ENCODE measurements at regions of chr12 and their contacts with region 1.

Region 1: DNA sequence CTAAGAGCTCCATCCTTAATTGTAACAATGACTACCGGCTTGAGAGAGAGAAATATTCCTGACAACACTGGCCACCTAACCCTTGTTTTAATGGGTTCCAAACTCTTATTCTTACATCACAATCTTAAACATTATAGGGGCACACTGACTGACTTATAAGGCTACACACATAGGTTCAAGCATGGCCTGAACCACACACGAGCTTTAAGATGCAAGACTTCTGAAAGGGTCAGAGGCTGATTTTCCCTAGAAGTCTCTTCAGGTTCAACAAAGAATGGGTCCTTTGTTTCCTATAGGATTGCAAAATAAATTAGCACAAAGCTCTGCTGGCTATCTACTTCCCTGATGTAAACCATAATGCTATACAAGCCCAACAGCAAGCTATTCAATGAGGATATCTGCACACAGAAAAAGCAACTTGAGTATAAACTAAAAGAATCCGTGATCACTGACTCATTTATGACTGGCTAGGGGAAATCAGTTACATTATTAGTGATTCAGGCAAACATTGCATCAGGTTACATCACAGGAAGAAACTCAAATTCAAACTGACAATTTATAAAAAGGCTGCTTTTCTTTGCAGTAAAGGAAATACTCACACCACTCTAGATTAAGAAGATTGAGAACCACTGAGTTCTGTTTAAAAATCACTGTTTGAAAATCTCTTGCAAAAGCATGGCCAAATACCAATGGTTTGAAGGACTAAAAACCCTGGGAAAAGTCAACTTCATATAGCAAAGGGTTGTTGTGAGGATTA is 8.5 kb downstream of the BTG1 start:
- DNase-seq: no peak
- H3K4me3 ChIP-seq: peak overlapping the region in 1 of 4 donors; percentile 94
- H3K27ac ChIP-seq: peak overlapping the region in 4 of 5 donors; percentile 27 to 99 (median 50)
- H3K4me1 ChIP-seq: peaks cover 39 to 75% of the 10 kb centered on the region in 2 donors
- H3K27me3 ChIP-seq: no peaks in the 10 kb centered on the region
- CTCF ChIP-seq: no peak
- POLR2A ChIP-seq: no peak

Region 2: DNA sequence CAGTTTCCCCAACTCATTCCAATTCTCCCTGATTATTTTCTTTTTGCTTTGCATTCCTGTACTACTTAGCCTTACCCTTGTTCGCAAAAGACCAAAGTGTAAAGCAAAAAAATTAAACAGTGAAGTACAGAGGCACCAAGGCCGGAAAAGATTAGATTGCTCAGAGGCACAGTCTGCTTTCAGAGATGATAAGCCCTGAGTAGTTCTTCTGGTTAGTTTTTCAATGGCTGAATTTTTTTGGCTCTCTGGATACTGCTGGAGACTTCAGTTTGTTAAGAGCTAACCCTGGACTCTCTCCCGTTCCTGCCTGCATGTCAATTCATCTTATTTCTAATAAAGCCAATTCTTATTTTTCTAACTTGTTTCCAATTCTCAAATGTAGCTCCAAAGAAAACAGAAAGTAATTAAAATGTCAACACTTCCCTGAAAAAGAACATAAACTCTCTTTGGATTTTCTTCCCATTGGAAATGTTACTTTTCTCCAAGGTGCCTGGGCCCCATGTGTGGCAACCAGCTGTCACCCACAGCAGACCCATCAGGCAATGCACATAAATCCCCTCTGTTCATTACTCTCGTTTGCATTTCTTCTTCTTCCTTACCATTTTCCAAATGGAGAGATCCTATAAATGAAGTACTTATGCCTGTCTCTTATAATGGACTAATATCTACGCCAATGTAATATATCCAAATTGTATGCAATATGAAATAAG is 134.3 kb before region 1 on chr12:
- intact Hi-C with region 1: loop called in 1 of 2 experiments (anchors 10 kb)
- DNase-seq: peak in 2 of 7 donors; percentile 10 to 14
- H3K4me3 ChIP-seq: no peak overlapping the region
- H3K27ac ChIP-seq: peak overlapping the region in 4 of 5 donors; percentile 2 to 73 (median 55)
- H3K4me1 ChIP-seq: peaks cover 6 to 25% of the 10 kb centered on the region in 2 donors
- H3K27me3 ChIP-seq: no peaks in the 10 kb centered on the region
- CTCF ChIP-seq: no peak
- POLR2A ChIP-seq: no peak